Head of caudate nucleus (tissue), 42 donors: ENCODE measurements at regions of chr13 and their contacts with region 1.

Region 1: GRCh38 chr13:114314074-114314912 is at the start of gene CHAMP1:
- DNase-seq: peak; percentile 87 to 98 (median 96)

Region 2: DNA sequence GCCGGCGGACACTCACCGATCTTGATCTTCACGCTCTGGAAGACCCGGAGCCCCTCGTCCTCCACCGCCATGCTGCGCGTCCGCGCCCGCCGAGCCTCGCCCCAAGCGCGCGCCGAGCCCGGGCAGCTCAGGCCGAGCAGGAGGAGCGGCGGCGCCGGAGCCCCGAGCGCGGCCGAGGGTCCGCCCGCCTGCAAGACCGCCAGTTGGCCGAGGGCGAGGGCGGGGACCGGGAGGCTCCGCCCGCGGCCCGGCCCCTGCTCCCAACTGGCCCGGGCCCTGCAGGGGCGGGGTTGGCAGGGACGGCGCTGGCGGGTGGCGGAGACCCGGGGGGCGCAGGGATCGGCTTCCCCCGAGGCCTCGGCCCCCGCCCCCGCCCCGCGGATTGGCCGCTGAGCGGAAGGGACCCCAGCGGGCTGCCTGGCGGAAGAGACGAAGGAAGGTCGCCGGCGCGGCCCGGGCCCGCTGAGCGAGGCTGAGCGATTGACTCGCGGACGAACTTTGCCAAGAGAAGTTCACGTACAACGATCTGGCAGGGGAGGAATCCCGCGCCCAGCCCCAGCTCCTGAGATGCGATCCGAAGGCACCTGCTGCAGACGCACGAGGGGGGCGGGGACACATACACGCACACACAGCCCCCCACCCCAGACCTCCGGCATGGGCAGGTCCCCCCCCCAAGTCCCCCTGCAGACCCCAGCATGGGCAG is 181.7 kb before region 1 on chr13 and contains the start of gene RASA3:
- intact Hi-C with region 1: no loop called
- DNase-seq: peak in 40 of 42 donors; percentile 46 to 88 (median 76)

Region 3: DNA sequence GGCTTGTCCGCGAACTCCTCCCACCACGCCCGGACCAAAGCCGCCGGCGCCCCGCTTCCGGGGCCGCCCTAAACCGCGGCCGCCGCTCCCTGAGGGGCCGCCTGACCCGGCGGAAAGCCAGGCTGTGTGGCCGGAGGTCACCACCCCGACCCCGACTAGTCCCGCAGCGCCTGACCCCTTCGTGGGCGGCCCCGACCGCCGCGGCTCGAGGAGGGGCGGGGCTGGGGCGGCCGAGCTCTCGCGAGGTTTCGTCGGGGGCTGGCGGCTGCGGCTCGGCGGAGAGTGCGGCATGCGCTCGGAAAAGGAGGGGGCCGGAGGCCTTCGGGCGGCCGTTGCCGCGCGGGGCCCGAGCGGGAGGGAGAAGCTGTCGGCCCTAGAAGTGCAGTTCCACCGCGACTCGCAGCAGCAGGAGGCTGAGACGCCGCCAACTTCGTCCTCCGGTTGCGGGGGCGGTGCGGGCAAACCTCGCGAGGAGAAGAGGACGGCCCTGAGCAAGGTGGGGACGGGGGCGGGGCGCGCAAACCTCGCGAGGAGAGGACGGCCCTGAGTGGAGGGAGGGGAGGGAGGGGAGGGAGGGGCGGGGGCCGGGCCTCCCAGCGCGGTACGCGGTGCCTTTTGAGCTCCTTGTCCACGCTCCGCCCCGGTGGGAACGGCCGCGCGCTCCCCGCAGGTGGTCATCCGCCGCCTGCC is 32.8 kb before region 1 on chr13 and contains the start of gene UPF3A:
- intact Hi-C with region 1: loop called (anchors 2 kb)
- DNase-seq: peak; percentile 69 to 95 (median 90)